Kidney (tissue), 22 donors: ENCODE measurements at regions of chr14 and their contacts with region 1.

Region 1: GRCh38 chr14:35576260-35576659 is 42.3 kb downstream of the INSM2 start:
- DNase-seq: no peak
- H3K4me3 ChIP-seq: no peak overlapping the region
- H3K27ac ChIP-seq: no peak overlapping the region
- H3K4me1 ChIP-seq: no peaks in the 10 kb centered on the region
- H3K27me3 ChIP-seq: no peaks in the 10 kb centered on the region
- CTCF ChIP-seq: no peak

Region 2: DNA sequence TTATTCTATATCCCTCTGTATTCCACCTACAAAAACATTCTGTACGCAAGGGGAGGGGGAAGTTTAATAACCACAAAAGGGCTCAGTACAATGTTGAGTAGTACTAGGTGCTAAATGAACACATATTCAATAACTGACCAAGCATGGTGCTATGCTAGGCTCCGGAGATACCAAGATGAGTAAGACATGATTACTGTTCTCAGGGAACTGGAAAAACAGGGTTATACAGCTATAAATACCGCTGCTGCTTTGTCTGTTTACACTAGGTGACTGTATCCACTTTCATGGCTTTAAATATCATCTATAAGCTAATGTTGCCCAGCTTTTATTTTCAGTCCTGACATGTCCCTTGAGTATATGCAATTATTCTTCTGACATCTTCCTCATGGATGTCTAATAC is 93.5 kb after region 1 on chr14:
- intact Hi-C with region 1: loop called (anchors 5 kb)
- DNase-seq: no peak
- H3K4me3 ChIP-seq: no peak overlapping the region
- H3K27ac ChIP-seq: no peak overlapping the region
- H3K4me1 ChIP-seq: no peaks in the 10 kb centered on the region
- H3K27me3 ChIP-seq: no peaks in the 10 kb centered on the region
- CTCF ChIP-seq: no peak

Region 3: DNA sequence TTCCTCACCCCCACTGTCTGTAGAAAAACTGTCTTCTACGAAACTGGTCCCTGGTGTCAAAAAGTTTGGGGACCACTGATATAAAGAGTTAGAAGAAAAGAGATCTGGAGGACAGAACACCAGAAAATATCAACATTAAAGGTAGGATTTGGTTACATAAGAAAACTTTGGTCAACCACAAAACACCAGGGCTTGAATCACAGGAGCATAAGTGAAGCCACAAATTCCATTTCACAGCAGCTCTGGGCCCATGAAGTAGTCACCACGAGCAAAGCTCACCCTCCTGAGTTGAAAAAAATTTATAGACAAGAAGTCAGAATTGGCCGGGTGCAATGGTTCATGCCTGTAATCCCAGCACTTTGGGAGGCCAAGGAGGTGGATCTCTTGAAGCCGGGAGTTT is 213.4 kb after region 1 on chr14:
- intact Hi-C with region 1: no loop called
- DNase-seq: no peak
- H3K4me3 ChIP-seq: no peak overlapping the region
- H3K27ac ChIP-seq: no peak overlapping the region
- H3K4me1 ChIP-seq: no peaks in the 10 kb centered on the region
- H3K27me3 ChIP-seq: no peaks in the 10 kb centered on the region
- CTCF ChIP-seq: no peak

Region 4: GRCh38 chr14:35963209-35963608 is 386.9 kb after region 1 on chr14:
- intact Hi-C with region 1: no loop called
- DNase-seq: no peak
- H3K4me3 ChIP-seq: no peak overlapping the region
- H3K27ac ChIP-seq: no peak overlapping the region
- H3K4me1 ChIP-seq: no peaks in the 10 kb centered on the region
- H3K27me3 ChIP-seq: no peaks in the 10 kb centered on the region
- CTCF ChIP-seq: no peak

Region 5: DNA sequence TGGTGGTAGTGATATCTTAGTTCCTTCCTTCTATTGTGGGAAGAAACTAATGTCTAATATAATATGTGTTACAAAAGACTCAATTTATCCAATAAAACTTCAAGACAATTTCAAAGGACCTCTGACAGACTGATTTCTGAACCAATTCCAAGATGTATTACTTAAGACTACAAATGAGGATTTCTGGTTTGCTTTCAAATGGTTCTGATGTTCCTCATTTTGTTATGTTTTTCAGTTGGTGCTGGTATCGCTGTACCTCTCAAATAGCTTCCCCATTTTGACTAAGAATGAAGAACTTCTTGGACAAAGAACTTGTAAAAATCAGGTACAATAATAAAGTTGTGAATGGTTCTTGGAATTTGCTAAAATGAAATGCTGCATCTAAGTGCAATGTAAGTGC is 763.6 kb after region 1 on chr14:
- intact Hi-C with region 1: no loop called
- DNase-seq: no peak
- H3K4me3 ChIP-seq: no peak overlapping the region
- H3K27ac ChIP-seq: no peak overlapping the region
- H3K4me1 ChIP-seq: no peaks in the 10 kb centered on the region
- H3K27me3 ChIP-seq: no peaks in the 10 kb centered on the region
- CTCF ChIP-seq: no peak